ENCODE measurements at regions of chr11 and their contacts with region 1.

Region 1: DNA sequence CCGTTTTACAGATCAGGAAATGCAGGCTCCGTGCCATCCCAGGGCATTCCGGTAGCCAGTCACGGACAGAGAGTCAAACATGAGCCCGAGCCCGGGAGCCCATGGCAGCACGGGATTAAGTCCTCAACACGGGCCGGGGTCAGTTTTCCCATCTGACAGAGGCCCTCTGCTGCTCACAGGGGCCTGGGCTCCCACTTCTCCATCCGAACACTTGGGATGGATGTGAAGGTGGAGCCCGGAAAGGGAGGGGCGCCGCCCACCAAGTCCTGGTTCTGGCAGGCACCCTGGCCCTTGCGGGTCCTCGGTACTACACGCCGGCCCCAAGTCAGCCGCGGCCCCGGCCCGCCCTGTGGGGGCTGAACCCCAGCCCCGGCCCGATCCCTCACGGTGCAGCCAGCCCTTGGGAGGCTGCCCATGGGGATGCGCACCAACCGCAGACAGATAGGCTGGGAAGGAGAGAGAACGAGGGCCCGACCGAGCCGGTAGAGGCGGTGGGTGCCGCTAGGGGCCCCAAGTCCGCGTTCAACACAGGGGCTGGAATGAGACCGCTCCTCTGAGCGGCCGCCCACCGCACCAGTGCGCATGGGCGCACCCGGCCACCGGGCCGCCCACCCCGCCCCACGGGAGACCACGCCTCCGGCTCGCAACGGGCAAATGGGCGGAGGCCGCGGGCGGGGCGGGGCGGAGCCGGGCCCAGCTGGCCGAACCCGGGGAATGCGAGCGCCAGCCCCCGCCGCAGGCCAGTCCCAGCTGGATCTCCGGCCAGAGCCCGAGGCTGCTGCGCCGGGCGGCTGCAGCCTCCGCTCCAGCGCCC is at the start of gene CAPN5:
- DNase-seq: peak; percentile 95
- ATAC-seq: peak; percentile 89
- H3K4me3 Mint-ChIP-seq: peak within 1 kb of the TSS; percentile 90
- H3K27ac Mint-ChIP-seq: peak within 1 kb of the TSS; percentile 83
- H3K4me1 Mint-ChIP-seq: peaks cover 23% of the 10 kb centered on the region
- H3K27me3 Mint-ChIP-seq: peaks cover 21% of the 10 kb centered on the region
- CTCF ChIP-seq: no peak
- total RNA-seq, gene CAPN5: 24.0 to 27.4 TPM (median 24.3 TPM) in 3 replicates

Region 2: GRCh38 chr11:77047007-77047927 is 19.2 kb before region 1 on chr11:
- CTCF ChIA-PET with region 1: interaction called, 18 read pairs
- POLR2A ChIA-PET with region 1: interaction called, 8 read pairs
- DNase-seq: peak; percentile 61
- ATAC-seq: peak; percentile 80
- H3K4me3 Mint-ChIP-seq: peak overlapping the region; percentile 51
- H3K27ac Mint-ChIP-seq: peak overlapping the region; percentile 52
- H3K4me1 Mint-ChIP-seq: peaks cover 14% of the 10 kb centered on the region
- H3K27me3 Mint-ChIP-seq: peaks cover 16% of the 10 kb centered on the region
- CTCF ChIP-seq: no peak

Region 3: DNA sequence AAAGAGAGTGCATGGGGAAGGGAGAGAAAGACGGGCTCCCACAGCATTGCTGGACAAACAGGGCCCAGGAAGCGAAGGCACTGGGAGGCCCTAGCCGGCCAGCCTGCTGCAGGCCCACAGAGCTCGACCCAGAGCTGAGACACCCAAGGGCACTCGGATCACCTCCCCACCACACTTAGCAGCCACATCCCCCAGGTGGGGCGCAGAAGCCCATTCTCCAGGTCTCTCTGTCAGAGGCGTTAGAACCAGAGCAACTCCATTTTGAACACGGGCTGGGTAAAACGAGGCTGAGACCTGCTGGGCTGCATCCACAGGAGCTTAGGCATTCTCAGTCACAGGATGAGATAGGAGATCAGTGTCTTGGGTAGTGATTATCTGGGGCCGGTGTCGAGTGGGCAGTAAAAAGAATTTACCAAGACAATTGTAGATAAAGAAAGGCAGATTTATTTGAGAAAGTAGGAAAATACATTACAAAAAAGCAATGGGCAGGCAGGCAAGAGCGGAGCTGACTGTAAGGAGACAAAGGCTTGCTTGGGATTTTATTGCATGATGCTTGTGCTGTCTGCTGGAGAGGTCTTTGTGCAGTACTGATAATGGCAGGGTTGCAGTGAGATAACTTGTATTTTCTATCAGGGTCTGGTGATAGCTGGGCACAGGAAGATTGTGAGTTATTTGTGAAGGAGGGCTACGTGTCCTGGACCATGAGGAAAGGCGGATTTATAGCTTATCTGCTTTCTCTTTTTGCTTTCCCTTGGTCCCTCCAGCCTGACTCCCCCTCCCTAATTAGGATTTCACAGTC is 13.0 kb before region 1 on chr11:
- CTCF ChIA-PET with region 1: interaction called, 18 read pairs
- POLR2A ChIA-PET with region 1: no interaction called
- DNase-seq: no peak
- ATAC-seq: no peak
- H3K4me3 Mint-ChIP-seq: no peak overlapping the region
- H3K27ac Mint-ChIP-seq: no peak overlapping the region
- H3K4me1 Mint-ChIP-seq: 0 out of 2 replicates have a peak, but pooled peaks cover 8% of the 10 kb centered on the region
- H3K27me3 Mint-ChIP-seq: peaks cover 3% of the 10 kb centered on the region
- CTCF ChIP-seq: no peak

Measured in WTC11 (cell line).